GM12878 (cell line): ENCODE measurements at regions of chr20 and their contacts with region 1.

Region 1: DNA sequence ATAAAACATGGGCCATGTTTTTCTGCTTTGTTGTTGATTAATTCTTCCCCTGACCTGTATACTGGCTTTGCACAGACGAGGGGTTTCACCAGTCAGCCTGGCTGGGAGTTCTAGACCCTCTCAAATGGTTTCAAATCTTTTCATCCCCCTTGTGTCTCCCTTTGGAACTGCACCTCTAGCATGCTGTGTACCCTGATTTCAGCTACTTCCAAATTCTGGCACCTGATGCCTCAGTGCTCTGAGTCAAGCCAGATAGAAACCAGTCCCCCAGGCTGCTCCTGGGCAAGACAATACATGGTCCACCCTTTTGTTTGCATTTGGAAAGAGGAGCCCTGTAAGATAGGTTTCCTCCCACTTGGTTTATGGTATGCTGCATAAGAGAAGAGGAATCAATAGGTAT is 290.2 kb downstream of the BTBD3 start:
- DNase-seq: no peak
- ATAC-seq: peak; percentile 54
- H3K4me3 ChIP-seq: no peak overlapping the region
- H3K27ac ChIP-seq: no peak overlapping the region
- H3K4me1 ChIP-seq: no peaks in the 10 kb centered on the region
- H3K27me3 ChIP-seq: no peaks in the 10 kb centered on the region
- CTCF ChIP-seq: peak; percentile 31 to 41 (median 38); a peak in 3 of 6 replicates
- EP300 ChIP-seq: no peak
- POLR2A ChIP-seq: no peak
- RAD21 ChIP-seq: no peak

Region 2: GRCh38 chr20:11676630-11677284 is 531.1 kb before region 1 on chr20:
- CTCF ChIA-PET with region 1: interaction called, 3 read pairs
- POLR2A ChIA-PET with region 1: no interaction called
- RAD21 ChIA-PET with region 1: no interaction called
- SMC1A ChIA-PET with region 1: no interaction called
- in situ Hi-C with region 1: no loop called
- intact Hi-C with region 1: loop called (anchors 1 kb)
- DNase-seq: no peak
- ATAC-seq: peak; percentile 82
- H3K4me3 ChIP-seq: no peak overlapping the region
- H3K27ac ChIP-seq: no peak overlapping the region
- H3K4me1 ChIP-seq: no peaks in the 10 kb centered on the region
- H3K27me3 ChIP-seq: no peaks in the 10 kb centered on the region
- CTCF ChIP-seq: peak; percentile 43 to 72 (median 67)
- EP300 ChIP-seq: no peak
- POLR2A ChIP-seq: no peak
- RAD21 ChIP-seq: peak; percentile 52

Region 3: GRCh38 chr20:11912013-11912658 is 295.7 kb before region 1 on chr20:
- CTCF ChIA-PET with region 1: interaction called, 11 read pairs
- POLR2A ChIA-PET with region 1: no interaction called
- RAD21 ChIA-PET with region 1: interaction called, 3 read pairs
- SMC1A ChIA-PET with region 1: interaction called, 6 read pairs
- in situ Hi-C with region 1: no loop called
- intact Hi-C with region 1: loop called (anchors 10 kb)
- DNase-seq: no peak
- ATAC-seq: peak; percentile 80
- H3K4me3 ChIP-seq: no peak overlapping the region
- H3K27ac ChIP-seq: no peak overlapping the region
- H3K4me1 ChIP-seq: no peaks in the 10 kb centered on the region
- H3K27me3 ChIP-seq: no peaks in the 10 kb centered on the region
- CTCF ChIP-seq: peak; percentile 38 to 50 (median 40); a peak in 4 of 6 replicates
- EP300 ChIP-seq: no peak
- POLR2A ChIP-seq: no peak
- RAD21 ChIP-seq: peak; percentile 25; the same call in 1 of the 2 replicates

Region 4: DNA sequence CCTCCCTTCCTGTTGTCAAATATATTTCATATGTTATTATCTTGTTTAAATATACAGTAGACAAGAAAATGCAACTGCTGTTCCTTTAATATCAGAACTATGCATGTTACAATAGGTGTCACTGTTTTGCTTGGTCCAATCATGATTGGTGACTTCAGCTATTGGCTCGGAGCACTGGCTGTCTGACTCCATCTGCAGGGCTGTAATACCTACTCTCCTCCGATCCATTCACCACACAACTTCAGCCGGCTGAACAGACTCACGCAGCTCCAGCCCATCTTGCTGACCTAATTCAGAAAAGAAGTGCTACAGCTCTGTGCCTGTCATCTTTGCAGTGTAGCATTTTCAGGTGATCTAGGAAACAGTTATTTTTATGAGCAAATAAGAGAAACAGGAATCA is 290.2 kb before region 1 on chr20 and contains the start of gene BTBD3:
- CTCF ChIA-PET with region 1: interaction called, 11 read pairs
- POLR2A ChIA-PET with region 1: no interaction called
- RAD21 ChIA-PET with region 1: interaction called, 3 read pairs
- SMC1A ChIA-PET with region 1: interaction called, 6 read pairs
- in situ Hi-C with region 1: no loop called
- intact Hi-C with region 1: loop called (anchors 10 kb)
- DNase-seq: no peak
- ATAC-seq: peak; percentile 48; the same call in 2 of the 3 replicates
- H3K4me3 ChIP-seq: no peak within 1 kb of the TSS
- H3K27ac ChIP-seq: no peak within 1 kb of the TSS
- H3K4me1 ChIP-seq: no peaks in the 10 kb centered on the region
- H3K27me3 ChIP-seq: no peaks in the 10 kb centered on the region
- CTCF ChIP-seq: no peak
- EP300 ChIP-seq: no peak
- POLR2A ChIP-seq: no peak
- RAD21 ChIP-seq: no peak
- polyA plus RNA-seq, gene BTBD3: 0.02 to 0.13 TPM